Naive thymus-derived CD4-positive, alpha-beta T cell (primary cell): ENCODE measurements at regions of chr19 and their contacts with region 1.

Region 1: DNA sequence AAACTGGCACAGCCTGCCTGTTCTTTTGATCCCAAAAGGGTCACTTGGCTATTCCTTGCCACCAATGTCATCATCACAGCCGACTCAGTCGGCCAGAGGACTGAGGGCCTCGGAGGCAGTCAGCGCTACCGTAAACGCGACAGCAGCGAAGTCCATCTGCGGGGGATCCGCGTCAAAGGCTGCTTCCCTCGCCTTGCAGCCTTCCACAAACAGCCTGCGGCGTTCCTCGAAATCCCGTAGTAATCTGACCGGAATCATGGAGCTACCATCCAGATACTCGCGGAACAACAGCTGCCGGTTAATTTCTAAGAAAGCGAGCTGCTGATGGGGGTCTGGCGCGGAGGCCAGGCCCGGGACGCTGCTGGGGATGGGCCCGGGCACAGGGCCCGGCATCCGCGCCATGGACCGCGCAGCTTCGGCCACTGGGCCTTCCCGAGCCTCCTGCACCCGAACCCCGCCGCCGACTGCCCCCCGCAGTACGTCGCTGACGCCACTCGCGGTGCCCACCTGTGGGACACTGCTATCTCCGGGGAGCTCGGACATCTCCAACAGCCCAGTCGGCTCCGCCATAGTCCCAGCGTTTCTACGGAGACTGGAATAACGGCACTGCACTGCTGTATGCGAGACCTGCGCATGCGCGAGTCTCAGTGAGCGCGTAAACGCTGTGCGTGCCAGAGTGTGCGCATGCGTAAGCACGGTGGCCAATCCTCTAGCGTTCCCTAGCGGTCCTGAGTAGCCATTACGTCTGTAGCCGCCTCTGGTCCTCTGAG is at the start of gene EID2B:
- DNase-seq: peak; percentile 91 to 95 (median 93)
- ATAC-seq: peak; percentile 99
- H3K4me3 ChIP-seq: peak within 1 kb of the TSS; percentile 92
- H3K4me3 Mint-ChIP-seq: peak within 1 kb of the TSS; percentile 87 to 96 (median 92)
- H3K27ac ChIP-seq: peak within 1 kb of the TSS; percentile 82
- H3K27ac Mint-ChIP-seq: peak within 1 kb of the TSS; percentile 74 to 95 (median 92)
- H3K4me1 ChIP-seq: peaks cover 9 to 15% of the 10 kb centered on the region in 2 donors
- H3K4me1 Mint-ChIP-seq: peaks cover 20 to 55% (median 32%) of the 10 kb centered on the region in 7 donors
- H3K27me3 ChIP-seq: no peaks in the 10 kb centered on the region
- H3K27me3 Mint-ChIP-seq: no peaks in the 10 kb centered on the region
- total RNA-seq, gene EID2B: 4.4 to 8.5 (median 6.2) TPM

Region 2: GRCh38 chr19:39110263-39110967 is 422.0 kb before region 1 on chr19:
- CTCF ChIA-PET with region 1: no interaction called
- POLR2A ChIA-PET with region 1: no interaction called
- intact Hi-C with region 1: loop called in 1 of 2 experiments (anchors 1 kb)
- DNase-seq: peak; percentile 33 to 73 (median 57)
- ATAC-seq: peak; percentile 88
- H3K4me3 ChIP-seq: no peak overlapping the region
- H3K4me3 Mint-ChIP-seq: no peak overlapping the region
- H3K27ac ChIP-seq: no peak overlapping the region
- H3K27ac Mint-ChIP-seq: peak overlapping the region in 1 of 9 donors; percentile 72
- H3K4me1 ChIP-seq: no peaks in the 10 kb centered on the region
- H3K4me1 Mint-ChIP-seq: peaks cover 0 to 7% (median 5%) of the 10 kb centered on the region in 7 donors
- H3K27me3 ChIP-seq: no peaks in the 10 kb centered on the region
- H3K27me3 Mint-ChIP-seq: peaks cover 0 to 16% (median 0%) of the 10 kb centered on the region in 5 donors

Region 3: DNA sequence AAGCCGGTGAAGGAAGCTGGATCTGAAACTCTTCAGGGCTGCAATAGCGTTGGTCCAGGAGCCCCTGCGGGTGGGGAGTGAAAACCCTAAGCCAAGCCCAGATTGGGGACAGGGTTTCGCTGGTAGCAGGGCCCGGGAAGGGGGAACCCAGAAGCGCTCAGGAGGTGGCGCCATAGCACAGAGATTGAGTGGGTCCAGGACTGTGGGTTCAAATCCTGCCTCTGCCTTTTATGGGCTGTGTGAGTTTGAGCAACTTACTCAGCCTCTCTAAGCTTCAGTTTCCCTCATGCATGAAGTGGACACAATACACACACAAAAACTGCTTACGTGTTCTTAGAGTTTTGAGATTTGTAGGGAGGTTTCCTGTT is 320.1 kb before region 1 on chr19:
- CTCF ChIA-PET with region 1: no interaction called
- POLR2A ChIA-PET with region 1: no interaction called
- intact Hi-C with region 1: loop called in 1 of 2 experiments (anchors 1 kb)
- DNase-seq: peak in 8 of 9 donors; percentile 24 to 58 (median 46)
- ATAC-seq: peak; percentile 80
- H3K4me3 ChIP-seq: no peak overlapping the region
- H3K4me3 Mint-ChIP-seq: no peak overlapping the region
- H3K27ac ChIP-seq: no peak overlapping the region
- H3K27ac Mint-ChIP-seq: no peak overlapping the region
- H3K4me1 ChIP-seq: no peaks in the 10 kb centered on the region
- H3K4me1 Mint-ChIP-seq: no peaks in the 10 kb centered on the region
- H3K27me3 ChIP-seq: no peaks in the 10 kb centered on the region
- H3K27me3 Mint-ChIP-seq: peaks cover 0 to 13% (median 5%) of the 10 kb centered on the region in 5 donors

Region 4: GRCh38 chr19:39435499-39436349 is 96.7 kb before region 1 on chr19 and contains the start of gene RPS16:
- CTCF ChIA-PET with region 1: interaction called, 24 read pairs
- POLR2A ChIA-PET with region 1: interaction called, 15 read pairs
- intact Hi-C with region 1: loop called (anchors 1 kb)
- DNase-seq: peak; percentile 93 to 100 (median 98)
- ATAC-seq: peak; percentile 98
- H3K4me3 ChIP-seq: peak within 1 kb of the TSS; percentile 98
- H3K4me3 Mint-ChIP-seq: peak within 1 kb of the TSS; percentile 92 to 100 (median 98)
- H3K27ac ChIP-seq: peak within 1 kb of the TSS; percentile 97
- H3K27ac Mint-ChIP-seq: peak within 1 kb of the TSS; percentile 95 to 100 (median 99)
- H3K4me1 ChIP-seq: peaks cover 27% of the 10 kb centered on the region in 2 donors
- H3K4me1 Mint-ChIP-seq: peaks cover 20 to 53% (median 40%) of the 10 kb centered on the region in 7 donors
- H3K27me3 ChIP-seq: no peaks in the 10 kb centered on the region
- H3K27me3 Mint-ChIP-seq: peaks cover 0 to 5% (median 0%) of the 10 kb centered on the region in 5 donors
- total RNA-seq, gene RPS16: 2,281 to 4,335 (median 4,063) TPM

Region 5: GRCh38 chr19:39480337-39481228 is 51.8 kb before region 1 on chr19 and contains the start of gene TIMM50:
- CTCF ChIA-PET with region 1: interaction called, 3 read pairs
- POLR2A ChIA-PET with region 1: no interaction called
- intact Hi-C with region 1: loop called (anchors 1 kb)
- DNase-seq: peak; percentile 93 to 98 (median 95)
- ATAC-seq: peak; percentile 100
- H3K4me3 ChIP-seq: peak within 1 kb of the TSS; percentile 74
- H3K4me3 Mint-ChIP-seq: peak within 1 kb of the TSS; percentile 86 to 97 (median 92)
- H3K27ac ChIP-seq: peak within 1 kb of the TSS; percentile 86
- H3K27ac Mint-ChIP-seq: peak within 1 kb of the TSS; percentile 80 to 97 (median 93)
- H3K4me1 ChIP-seq: peaks cover 10 to 11% of the 10 kb centered on the region in 2 donors
- H3K4me1 Mint-ChIP-seq: peaks cover 14 to 32% (median 25%) of the 10 kb centered on the region in 7 donors
- H3K27me3 ChIP-seq: no peaks in the 10 kb centered on the region
- H3K27me3 Mint-ChIP-seq: no peaks in the 10 kb centered on the region
- total RNA-seq, gene TIMM50: 43.5 to 70.0 (median 50.0) TPM